Sigmoid colon (tissue), 7 donors: ENCODE measurements at regions of chr9 and their contacts with region 1.

Region 1: DNA sequence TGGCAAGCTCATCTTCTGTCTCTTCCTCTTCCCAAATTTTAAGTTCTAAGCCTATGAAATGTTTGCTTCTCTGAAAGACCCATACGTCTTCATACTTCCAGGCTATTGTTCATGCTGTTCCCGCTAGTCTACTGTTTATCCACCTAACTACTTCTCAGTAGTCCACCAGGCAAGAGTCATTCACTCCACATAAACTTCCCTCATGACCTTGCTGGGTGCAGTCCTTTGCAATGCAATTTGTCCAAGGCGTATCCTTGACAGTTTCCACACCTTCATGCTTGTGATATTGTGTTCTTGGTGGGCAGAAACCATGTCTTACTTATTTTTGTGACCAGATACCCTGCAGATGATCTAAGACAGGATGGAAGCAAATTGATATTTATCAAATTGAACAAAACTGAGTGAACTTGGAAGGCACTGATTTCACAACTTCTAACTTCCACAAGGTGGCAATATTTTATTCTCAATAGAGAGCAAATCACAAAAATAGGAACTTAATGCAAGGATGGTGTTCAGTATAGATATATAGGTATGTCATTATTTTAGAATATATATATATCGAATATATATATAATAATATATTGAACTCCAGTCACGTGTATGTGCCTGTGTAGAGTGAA is 30.3 kb downstream of the TYRP1 start:
- DNase-seq: no peak
- H3K4me3 ChIP-seq: no peak overlapping the region
- H3K27ac ChIP-seq: peak overlapping the region in 1 of 4 donors; percentile 28
- H3K4me1 ChIP-seq: peaks cover 0 to 14% (median 0%) of the 10 kb centered on the region in 4 donors
- H3K27me3 ChIP-seq: no peaks in the 10 kb centered on the region
- CTCF ChIP-seq: peak; percentile 15 to 60 (median 53)
- EP300 ChIP-seq: no peak
- POLR2A ChIP-seq: no peak

Region 2: DNA sequence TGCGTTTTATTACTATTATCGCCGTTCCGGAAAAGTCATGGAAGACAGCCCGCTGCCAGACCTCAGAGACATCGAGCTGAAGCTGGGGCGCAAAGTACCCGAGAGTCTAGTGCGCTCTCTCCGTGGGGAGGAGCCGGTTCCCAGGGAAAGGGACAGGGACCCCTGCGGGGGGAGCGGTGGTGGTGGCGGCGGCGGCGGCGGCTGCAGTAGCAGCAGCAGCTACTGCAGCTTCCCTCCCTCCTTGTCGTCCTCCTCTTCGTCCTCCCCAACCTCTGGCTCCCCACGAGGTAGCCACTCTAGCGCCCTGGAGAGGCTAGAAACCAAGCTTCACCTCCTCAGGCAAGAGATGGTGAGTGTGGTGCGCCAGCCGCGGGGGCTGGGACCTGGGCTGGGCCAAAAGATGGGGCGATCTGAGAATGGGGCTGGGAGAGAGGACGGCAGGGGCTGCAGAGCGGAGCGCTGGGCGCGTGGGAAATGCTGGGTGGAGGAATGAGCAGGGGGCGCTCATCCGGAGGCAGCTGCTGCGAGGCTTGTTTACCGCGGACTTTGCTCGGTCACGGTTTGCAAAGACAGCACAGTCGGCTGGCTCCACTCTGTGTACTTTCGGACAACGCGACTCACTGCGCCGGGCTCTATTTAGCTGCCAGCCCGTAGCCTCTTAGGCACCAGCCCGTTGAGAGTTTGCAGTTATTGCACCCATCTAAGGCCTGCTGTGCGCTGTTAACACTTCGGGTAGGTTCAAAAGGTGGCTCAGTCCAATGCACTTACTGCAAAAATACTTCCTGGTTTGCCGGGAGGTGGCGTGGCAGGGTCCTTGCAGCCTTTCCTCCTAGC is 52.4 kb after region 1 on chr9:
- intact Hi-C with region 1: loop called (anchors 2 kb)
- DNase-seq: peak; percentile 67
- H3K4me3 ChIP-seq: peak overlapping the region; percentile 76 to 89 (median 82)
- H3K27ac ChIP-seq: peak overlapping the region; percentile 89 to 97 (median 94)
- H3K4me1 ChIP-seq: peaks cover 0 to 38% (median 23%) of the 10 kb centered on the region in 4 donors
- H3K27me3 ChIP-seq: no peaks in the 10 kb centered on the region
- CTCF ChIP-seq: peak; percentile 48 to 59 (median 54)
- EP300 ChIP-seq: no peak
- POLR2A ChIP-seq: no peak

Region 3: DNA sequence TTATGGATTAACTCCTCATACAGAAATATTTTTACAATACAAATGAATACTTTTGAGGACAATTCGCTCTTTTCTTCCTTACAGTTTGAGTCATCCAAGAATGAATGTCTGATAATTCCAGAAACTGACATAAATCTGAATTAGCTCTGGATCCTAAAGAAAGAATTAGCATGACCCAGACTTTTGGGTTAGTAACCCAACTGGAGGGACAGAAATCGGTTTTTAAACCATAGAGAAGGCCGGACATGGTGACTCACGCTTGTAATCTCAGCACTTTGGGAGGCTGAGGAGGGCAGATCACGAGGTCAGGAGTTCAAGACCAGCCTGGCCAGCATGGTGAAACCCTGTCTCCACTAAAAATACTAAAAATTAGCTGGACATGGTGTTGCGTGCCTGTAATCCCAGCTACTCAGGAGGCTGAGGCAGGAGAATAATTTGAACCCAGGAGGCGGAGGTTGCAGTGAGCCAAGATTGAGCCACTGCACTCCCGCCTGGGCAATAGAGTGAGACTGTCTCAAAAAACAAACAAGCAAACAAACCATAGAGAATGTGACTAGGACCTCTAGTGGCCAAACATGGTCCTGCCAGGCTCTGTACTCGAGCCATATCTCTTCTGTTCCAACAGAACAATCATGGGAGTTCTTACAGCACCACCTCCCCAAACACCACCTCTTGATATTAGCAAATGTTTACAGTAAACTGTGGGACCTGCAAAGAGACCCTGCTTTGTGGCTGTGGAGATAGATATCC is 96.1 kb after region 1 on chr9:
- intact Hi-C with region 1: loop called (anchors 5 kb)
- DNase-seq: no peak
- H3K4me3 ChIP-seq: no peak overlapping the region
- H3K27ac ChIP-seq: peak overlapping the region in 3 of 4 donors; percentile 65 to 85 (median 83)
- H3K4me1 ChIP-seq: peaks cover 0 to 80% (median 50%) of the 10 kb centered on the region in 4 donors
- H3K27me3 ChIP-seq: no peaks in the 10 kb centered on the region
- CTCF ChIP-seq: peak in 2 of 4 experiments; percentile 14 to 23
- EP300 ChIP-seq: no peak
- POLR2A ChIP-seq: no peak

Region 4: DNA sequence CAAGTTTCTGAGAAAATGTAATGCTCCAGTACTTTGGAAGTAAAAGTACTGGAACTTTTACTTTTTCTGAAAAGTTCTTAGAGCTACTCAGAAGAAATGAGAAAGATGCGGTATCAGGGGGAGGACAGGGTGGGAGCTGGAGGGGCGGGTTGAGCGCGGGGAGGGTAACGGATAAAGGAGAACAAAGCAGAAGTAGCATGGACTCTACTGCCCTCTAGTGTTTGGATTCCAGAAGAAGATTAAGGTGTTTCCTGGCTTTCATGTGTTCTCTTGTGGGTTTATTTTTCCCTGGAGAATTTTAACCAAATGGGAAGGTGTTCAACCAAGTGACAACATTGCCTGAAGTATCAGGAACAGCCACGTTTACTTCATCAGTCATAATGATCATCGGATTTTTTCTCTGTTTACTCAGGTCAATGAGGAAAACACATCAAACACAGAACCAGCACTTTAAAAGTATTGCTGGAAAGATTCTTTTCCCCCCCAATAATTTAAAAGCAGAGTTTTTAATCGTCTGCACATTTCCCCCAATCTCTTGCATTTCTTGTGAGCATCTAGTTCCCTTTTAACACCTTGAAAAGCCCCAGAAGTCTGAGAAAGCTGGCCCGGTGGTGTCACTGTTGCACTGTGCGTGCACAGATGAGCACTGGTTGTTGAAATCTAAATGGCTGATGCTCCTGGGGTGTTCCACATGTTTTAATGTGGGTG is 365.4 kb after region 1 on chr9:
- intact Hi-C with region 1: loop called (anchors 2 kb)
- DNase-seq: no peak
- H3K4me3 ChIP-seq: no peak overlapping the region
- H3K27ac ChIP-seq: no peak overlapping the region
- H3K4me1 ChIP-seq: no peaks in the 10 kb centered on the region
- H3K27me3 ChIP-seq: no peaks in the 10 kb centered on the region
- CTCF ChIP-seq: peak; percentile 27 to 78 (median 54)
- EP300 ChIP-seq: no peak
- POLR2A ChIP-seq: no peak

Region 5: GRCh38 chr9:13205824-13206223 is 482.3 kb after region 1 on chr9:
- intact Hi-C with region 1: no loop called
- DNase-seq: no peak
- H3K4me3 ChIP-seq: no peak overlapping the region
- H3K27ac ChIP-seq: no peak overlapping the region
- H3K4me1 ChIP-seq: no peaks in the 10 kb centered on the region
- H3K27me3 ChIP-seq: no peaks in the 10 kb centered on the region
- CTCF ChIP-seq: no peak
- EP300 ChIP-seq: no peak
- POLR2A ChIP-seq: no peak